ENCODE measurements at regions of chr19 and their contacts with region 1.

Region 1: DNA sequence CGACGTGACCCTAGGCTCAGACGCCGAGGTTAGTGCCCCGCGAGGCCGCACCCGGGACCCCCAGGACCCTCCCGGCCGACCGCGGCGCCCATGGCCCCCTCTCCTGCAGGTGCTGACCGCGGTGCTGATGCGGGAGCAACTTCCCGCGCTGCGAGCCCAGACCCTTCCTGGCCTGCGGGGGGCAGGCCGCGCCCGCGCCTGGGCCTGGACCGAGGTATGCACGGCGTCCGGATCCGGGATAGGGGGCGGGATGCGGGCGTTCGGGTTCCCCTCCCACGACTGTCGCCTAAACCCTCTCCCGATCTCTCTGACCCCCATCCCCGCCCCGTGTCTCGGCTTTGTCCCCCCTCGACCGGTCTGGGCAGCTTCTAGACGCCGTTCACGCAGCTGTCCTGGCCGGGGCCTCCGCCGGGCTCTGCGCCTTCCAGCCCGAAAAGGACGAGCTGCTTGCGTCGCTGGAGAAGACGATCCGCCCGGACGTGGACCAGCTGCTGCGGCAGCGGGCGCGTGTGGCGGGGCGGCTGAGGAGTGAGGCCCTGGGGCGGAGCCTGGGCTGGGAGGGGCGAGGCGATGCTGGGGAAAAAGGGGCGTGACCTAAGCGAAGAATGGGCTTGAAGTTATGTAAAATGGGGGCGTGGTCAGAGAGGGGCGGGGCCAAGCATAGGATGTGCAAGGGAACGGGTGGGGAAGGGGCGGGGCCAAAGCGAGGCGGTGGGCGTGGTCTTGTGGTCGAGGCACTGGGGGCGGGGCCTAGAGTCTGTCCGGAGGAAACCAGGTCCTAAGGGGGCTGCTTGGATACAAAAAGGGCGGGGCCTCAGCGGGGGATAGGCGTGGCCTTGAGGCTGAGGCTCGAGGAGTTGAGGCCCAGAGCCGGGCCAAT is 16.0 kb upstream of the COLGALT1 start:
- DNase-seq: peak; percentile 83 to 99 (median 96)
- ATAC-seq: peak; percentile 99
- H3K4me3 ChIP-seq: peak overlapping the region; percentile 56 to 63
- H3K4me3 Mint-ChIP-seq: peak overlapping the region; percentile 90
- H3K27ac ChIP-seq: peak overlapping the region; percentile 28 to 37
- H3K27ac Mint-ChIP-seq: peak overlapping the region; percentile 78
- H3K4me1 ChIP-seq: peaks cover 8% of the 10 kb centered on the region
- H3K4me1 Mint-ChIP-seq: peaks cover 11% of the 10 kb centered on the region
- H3K27me3 ChIP-seq: no peaks in the 10 kb centered on the region
- H3K27me3 Mint-ChIP-seq: no peaks in the 10 kb centered on the region
- CTCF ChIP-seq: no peak

Region 2: DNA sequence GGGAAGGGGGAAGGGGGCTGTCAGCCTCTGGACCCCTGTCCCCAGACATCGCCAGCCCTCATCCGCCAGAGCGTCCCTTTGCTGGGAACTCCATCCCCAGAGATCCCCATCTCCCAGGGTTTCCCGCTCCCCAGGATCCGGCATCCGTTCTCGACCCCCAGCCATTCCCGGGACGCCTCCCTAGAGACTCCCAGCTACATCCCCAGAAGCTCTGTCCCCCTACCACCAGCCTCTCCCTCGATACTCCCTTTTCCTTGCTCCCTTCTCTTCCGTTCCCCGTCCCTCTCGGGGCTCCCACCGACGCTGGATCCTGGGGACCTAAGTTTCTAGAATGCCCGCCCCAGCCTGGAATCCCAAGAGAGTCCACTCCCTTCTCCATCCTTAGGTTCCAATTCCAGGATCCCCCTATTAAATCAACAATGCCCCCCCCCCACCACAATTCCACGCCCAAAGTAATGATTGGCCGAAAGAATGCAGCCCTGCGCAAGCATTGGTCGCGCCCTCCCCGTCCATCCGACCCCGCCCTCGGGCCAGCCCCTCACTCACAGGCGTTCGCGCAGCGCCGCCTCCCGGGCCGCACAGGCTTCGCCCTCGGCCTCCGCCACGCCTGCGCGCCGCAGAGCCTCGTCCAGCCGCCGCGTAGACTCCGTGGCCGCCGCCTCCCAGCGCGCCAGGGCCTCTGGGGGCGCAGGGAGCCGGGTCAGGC is 148.7 kb before region 1 on chr19:
- CTCF ChIA-PET with region 1: no interaction called
- POLR2A ChIA-PET with region 1: no interaction called
- intact Hi-C with region 1: no loop called
- DNase-seq: peak; percentile 75 to 94 (median 90)
- ATAC-seq: peak; percentile 99
- H3K4me3 ChIP-seq: peak overlapping the region; percentile 63 to 66
- H3K4me3 Mint-ChIP-seq: peak overlapping the region; percentile 87
- H3K27ac ChIP-seq: no peak overlapping the region
- H3K27ac Mint-ChIP-seq: no peak overlapping the region
- H3K4me1 ChIP-seq: peaks cover 22% of the 10 kb centered on the region
- H3K4me1 Mint-ChIP-seq: peaks cover 18% of the 10 kb centered on the region
- H3K27me3 ChIP-seq: no peaks in the 10 kb centered on the region
- H3K27me3 Mint-ChIP-seq: no peaks in the 10 kb centered on the region
- CTCF ChIP-seq: peak; percentile 62

Region 3: DNA sequence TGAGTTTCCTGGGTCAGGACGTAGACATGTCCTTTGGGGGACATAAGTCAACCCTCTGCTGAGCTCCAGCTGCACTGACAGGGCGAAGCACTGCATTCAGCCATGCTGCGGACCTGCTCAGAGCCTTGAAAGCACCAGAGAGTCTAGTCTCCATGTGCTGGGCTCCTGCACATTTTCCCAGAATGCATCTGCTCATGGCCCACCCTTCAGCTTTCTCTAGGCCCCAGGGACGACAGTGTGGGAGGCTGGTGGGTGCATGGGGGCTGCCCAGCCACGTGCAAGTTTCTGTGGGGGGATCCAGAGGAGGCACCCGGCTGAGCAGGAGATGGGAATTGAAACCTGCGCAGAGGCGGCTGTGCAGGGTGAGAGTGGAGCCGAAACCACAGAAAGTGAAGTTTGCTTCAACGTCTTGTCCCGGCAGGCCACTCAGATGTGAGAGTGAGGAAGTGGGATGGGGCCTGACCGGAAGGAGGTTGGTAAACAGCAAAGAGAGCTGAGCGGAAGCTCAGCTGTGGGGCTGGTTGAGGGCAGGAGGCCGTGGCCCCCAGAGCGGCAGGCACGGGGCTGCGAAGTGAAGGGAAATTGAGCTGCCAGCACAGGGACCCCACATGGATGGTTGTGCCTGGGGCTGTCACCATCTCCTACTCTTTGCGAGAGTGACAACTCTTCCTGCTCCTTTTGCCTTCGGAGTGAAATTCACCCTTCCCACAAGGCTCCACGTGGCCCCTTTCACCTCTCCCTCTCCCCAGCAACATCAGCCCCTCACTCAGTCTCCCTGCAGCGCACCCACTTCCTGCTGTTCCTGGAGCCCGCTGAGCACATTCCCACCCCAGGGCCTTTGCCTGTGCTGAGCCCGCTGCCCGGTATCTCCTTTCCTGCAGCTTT is 16.2 kb before region 1 on chr19:
- CTCF ChIA-PET with region 1: interaction called, 3 read pairs
- POLR2A ChIA-PET with region 1: interaction called, 11 read pairs
- intact Hi-C with region 1: no loop called
- DNase-seq: peak in 8 of 9 experiments; percentile 24 to 82 (median 57)
- ATAC-seq: peak; percentile 73
- H3K4me3 ChIP-seq: peak overlapping the region; percentile 21 to 34
- H3K4me3 Mint-ChIP-seq: peak overlapping the region; percentile 72
- H3K27ac ChIP-seq: peak overlapping the region; percentile 46 to 77
- H3K27ac Mint-ChIP-seq: peak overlapping the region; percentile 93
- H3K4me1 ChIP-seq: peaks cover 39% of the 10 kb centered on the region
- H3K4me1 Mint-ChIP-seq: peaks cover 30% of the 10 kb centered on the region
- H3K27me3 ChIP-seq: no peaks in the 10 kb centered on the region
- H3K27me3 Mint-ChIP-seq: no peaks in the 10 kb centered on the region
- CTCF ChIP-seq: no peak

Region 4: GRCh38 chr19:17599780-17600179 is 60.3 kb after region 1 on chr19:
- CTCF ChIA-PET with region 1: no interaction called
- POLR2A ChIA-PET with region 1: no interaction called
- intact Hi-C with region 1: no loop called
- DNase-seq: no peak
- ATAC-seq: no peak
- H3K4me3 ChIP-seq: no peak overlapping the region
- H3K4me3 Mint-ChIP-seq: no peak overlapping the region
- H3K27ac ChIP-seq: no peak overlapping the region
- H3K27ac Mint-ChIP-seq: no peak overlapping the region
- H3K4me1 ChIP-seq: no peaks in the 10 kb centered on the region
- H3K4me1 Mint-ChIP-seq: no peaks in the 10 kb centered on the region
- H3K27me3 ChIP-seq: peaks cover 6 to 7% of the 10 kb centered on the region in 2 experiments
- H3K27me3 Mint-ChIP-seq: peaks cover 42% of the 10 kb centered on the region
- CTCF ChIP-seq: no peak

Measured in CD8-positive, alpha-beta T cell (primary cell).